ENCODE measurements at regions of chr17 and their contacts with region 1.

Region 1: DNA sequence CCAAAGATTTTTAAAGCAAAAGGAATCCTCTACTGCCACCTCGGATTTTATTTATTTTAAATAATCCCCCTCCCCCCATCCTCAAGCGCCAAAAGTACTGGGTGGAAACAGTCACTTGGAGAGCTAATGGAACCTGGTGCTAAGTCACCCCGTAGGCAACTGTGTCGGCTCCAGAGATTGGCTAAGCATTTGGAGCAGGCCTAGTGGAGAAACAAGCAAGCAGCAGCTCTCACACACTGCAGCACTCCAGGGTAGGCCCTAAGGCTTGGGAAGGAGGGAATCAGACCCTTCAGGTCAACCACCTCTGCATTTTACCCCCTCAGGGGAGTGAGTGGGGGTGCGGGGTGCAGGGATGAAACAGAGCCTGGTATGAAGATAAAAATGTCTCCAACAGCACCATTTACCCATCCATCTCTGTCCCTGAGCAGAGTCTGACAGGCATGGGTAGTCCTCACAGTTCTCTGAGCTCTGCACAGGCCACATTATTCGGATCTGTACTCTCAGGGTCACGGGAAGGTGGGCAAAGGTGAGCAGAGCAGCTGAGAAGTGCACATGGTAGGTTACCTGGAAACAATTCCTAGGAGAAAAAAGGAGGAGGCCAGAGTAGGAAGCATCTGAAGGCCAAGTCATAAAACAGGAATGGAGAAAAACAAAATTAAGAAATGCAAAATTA is 27.2 kb upstream of the STAC2 start:
- DNase-seq: no peak
- H3K4me3 ChIP-seq: no peak overlapping the region
- H3K27ac ChIP-seq: no peak overlapping the region
- H3K4me1 ChIP-seq: peaks cover 10% of the 10 kb centered on the region
- H3K27me3 ChIP-seq: no peaks in the 10 kb centered on the region
- CTCF ChIP-seq: no peak

Region 2: GRCh38 chr17:39161962-39162361 is 91.0 kb before region 1 on chr17:
- CTCF ChIA-PET with region 1: no interaction called
- POLR2A ChIA-PET with region 1: no interaction called
- intact Hi-C with region 1: no loop called
- DNase-seq: no peak
- H3K4me3 ChIP-seq: no peak overlapping the region
- H3K27ac ChIP-seq: no peak overlapping the region
- H3K4me1 ChIP-seq: 0 out of 2 replicates have a peak, but pooled peaks cover 4% of the 10 kb centered on the region
- H3K27me3 ChIP-seq: peaks cover 8% of the 10 kb centered on the region; the same call in 1 of the 2 replicates
- CTCF ChIP-seq: no peak

Region 3: DNA sequence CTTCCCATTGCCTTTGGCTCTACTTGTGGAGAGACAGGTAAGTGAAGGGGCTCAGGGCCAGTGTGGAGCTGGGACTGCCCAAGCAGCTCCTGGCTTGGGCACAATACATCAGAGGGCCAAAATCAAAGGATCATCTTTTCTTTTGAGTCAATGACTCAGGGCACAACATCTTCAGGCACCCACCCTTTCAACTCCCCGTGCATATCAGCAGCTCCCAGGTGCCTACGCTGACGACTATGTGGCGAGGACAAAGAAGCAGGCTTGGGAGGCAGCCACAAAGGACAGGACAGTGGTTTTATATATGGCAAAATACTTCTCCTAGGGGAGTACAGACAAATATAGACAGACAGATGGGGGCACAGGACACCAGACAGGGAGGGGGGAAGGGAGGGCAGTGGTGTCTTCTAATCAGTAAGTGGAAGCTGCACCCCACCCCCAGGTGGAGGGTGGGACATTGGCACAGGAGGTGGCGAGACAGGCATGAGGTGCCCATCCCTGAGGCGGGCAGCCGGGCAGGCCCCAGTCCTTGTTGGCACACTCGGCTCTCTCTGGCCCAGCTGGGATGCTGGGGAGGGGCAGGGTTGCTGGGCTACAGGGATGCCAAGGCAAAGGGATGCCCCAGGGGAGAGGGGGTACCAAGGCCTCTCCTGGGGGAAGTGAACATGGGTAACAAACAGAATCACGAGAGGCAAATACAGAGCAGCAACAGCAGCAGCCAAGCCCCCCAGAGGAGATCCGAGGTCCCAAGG is 79.2 kb before region 1 on chr17:
- CTCF ChIA-PET with region 1: interaction called, 16 read pairs
- POLR2A ChIA-PET with region 1: no interaction called
- intact Hi-C with region 1: no loop called
- DNase-seq: no peak
- H3K4me3 ChIP-seq: no peak overlapping the region
- H3K27ac ChIP-seq: no peak overlapping the region
- H3K4me1 ChIP-seq: peaks cover 6% of the 10 kb centered on the region
- H3K27me3 ChIP-seq: no peaks in the 10 kb centered on the region
- CTCF ChIP-seq: no peak